ENCODE measurements at regions of chr10 and their contacts with region 1.

Region 1: GRCh38 chr10:127906548-127907377 is at the start of gene PTPRE:
- DNase-seq: peak; percentile 17 to 88
- H3K4me3 ChIP-seq: peak within 1 kb of the TSS; percentile 36 to 87 (median 54)
- H3K27ac ChIP-seq: no peak within 1 kb of the TSS
- H3K4me1 ChIP-seq: peaks cover 0 to 3% (median 1%) of the 10 kb centered on the region in 4 experiments; a peak in 5 of 7 replicates
- H3K27me3 ChIP-seq: peaks cover 3 to 23% (median 15%) of the 10 kb centered on the region in 4 experiments
- CTCF ChIP-seq: peak; percentile 72 to 94 (median 88)
- EP300 ChIP-seq: no peak
- POLR2A ChIP-seq: no peak
- RAD21 ChIP-seq: peak; percentile 67 to 91
- total RNA-seq, gene PTPRE: 0.54 and 0.69 TPM in 2 replicates

Region 2: GRCh38 chr10:127738512-127739424 is 168.0 kb before region 1 on chr10:
- CTCF ChIA-PET with region 1: no interaction called
- POLR2A ChIA-PET with region 1: no interaction called
- DNase-seq: peak in 1 of 2 experiments; percentile 58
- H3K4me3 ChIP-seq: peak overlapping the region; percentile 21 to 60 (median 54); a peak in 5 of 8 replicates
- H3K27ac ChIP-seq: no peak overlapping the region
- H3K4me1 ChIP-seq: peaks cover 0 to 26% (median 13%) of the 10 kb centered on the region in 4 experiments; a peak in 6 of 7 replicates
- H3K27me3 ChIP-seq: peaks cover 25 to 64% (median 60%) of the 10 kb centered on the region in 4 experiments
- CTCF ChIP-seq: no peak
- EP300 ChIP-seq: no peak
- POLR2A ChIP-seq: no peak
- RAD21 ChIP-seq: no peak

Region 3: DNA sequence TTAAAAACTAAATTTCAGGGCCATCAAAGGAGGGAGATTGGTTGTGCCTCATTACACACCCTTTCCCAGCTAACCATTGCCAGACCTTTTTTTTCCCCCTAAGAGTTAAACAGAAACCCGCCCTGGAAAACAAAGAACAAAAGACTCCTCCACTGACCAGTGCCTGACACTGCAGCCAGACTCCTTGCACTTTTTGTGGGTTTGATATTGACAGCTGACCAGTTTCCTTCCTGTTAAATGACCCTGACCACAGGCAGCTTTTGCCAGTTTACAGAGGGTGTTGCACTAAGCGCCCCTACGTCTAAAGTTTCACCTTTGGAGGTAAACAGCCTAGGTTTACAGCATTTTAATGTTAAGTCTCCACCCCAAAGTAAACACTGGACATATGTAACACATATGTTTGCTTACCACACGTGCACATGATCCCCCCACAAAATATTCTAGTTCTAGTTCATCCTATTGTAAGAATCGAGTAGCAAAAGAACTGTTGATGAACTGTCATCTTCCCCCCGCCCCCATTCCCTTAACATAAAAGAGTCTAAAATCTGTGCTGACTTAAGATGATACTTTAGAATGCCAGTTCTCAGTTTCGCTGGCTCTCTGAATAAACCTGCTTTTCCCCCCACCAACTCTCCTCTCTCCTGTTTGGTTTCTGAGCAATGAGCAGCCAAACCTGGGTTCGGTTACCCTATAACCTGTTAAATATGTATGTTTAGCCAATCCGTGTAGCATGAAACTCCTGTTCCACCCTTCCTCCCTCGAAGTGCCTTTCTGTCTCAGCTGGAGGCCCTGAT is 131.8 kb before region 1 on chr10:
- CTCF ChIA-PET with region 1: no interaction called
- POLR2A ChIA-PET with region 1: no interaction called
- DNase-seq: no peak
- H3K4me3 ChIP-seq: no peak overlapping the region
- H3K27ac ChIP-seq: no peak overlapping the region
- H3K4me1 ChIP-seq: no peaks in the 10 kb centered on the region
- H3K27me3 ChIP-seq: no peaks in the 10 kb centered on the region
- CTCF ChIP-seq: no peak
- EP300 ChIP-seq: no peak
- POLR2A ChIP-seq: no peak
- RAD21 ChIP-seq: no peak

Region 4: DNA sequence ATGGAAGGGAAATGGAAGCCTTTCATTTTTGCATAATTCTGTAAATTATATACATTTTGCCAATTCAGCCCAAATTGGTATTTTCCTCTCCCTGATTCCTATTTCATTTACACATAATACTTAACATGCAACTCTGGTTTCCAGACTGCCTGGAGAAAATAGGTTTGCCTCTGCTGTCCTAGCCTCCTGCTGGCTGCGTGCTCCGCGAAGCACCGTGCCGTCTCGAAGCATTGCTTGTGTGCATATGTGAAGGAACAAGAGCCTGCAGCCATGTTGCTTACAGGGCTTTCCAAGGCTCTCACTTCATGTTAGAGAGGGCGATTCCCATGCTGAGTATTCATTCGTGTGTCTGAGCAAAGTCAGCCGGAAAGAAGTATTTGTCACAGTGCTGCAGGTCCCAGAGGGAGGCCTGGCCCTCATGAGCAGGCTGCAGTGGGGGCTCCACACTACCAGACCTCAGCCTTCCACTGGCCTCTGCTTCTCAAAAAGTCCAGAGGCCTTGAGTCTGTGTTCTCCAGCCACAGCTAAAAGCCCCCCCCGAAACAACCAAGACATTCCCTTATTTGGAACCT is 80.5 kb before region 1 on chr10:
- CTCF ChIA-PET with region 1: no interaction called
- POLR2A ChIA-PET with region 1: no interaction called
- DNase-seq: no peak
- H3K4me3 ChIP-seq: no peak overlapping the region
- H3K27ac ChIP-seq: no peak overlapping the region
- H3K4me1 ChIP-seq: peaks cover 0 to 3% (median 1%) of the 10 kb centered on the region in 4 experiments; a peak in 2 of 7 replicates
- H3K27me3 ChIP-seq: no peaks in the 10 kb centered on the region
- CTCF ChIP-seq: no peak
- EP300 ChIP-seq: no peak
- POLR2A ChIP-seq: no peak
- RAD21 ChIP-seq: no peak

Region 5: GRCh38 chr10:127935071-127935561 is 28.4 kb after region 1 on chr10:
- CTCF ChIA-PET with region 1: interaction called, 12 read pairs
- POLR2A ChIA-PET with region 1: no interaction called
- DNase-seq: no peak
- H3K4me3 ChIP-seq: no peak overlapping the region
- H3K27ac ChIP-seq: no peak overlapping the region
- H3K4me1 ChIP-seq: peaks cover 0 to 3% (median 0%) of the 10 kb centered on the region in 4 experiments; a peak in 1 of 7 replicates
- H3K27me3 ChIP-seq: no peaks in the 10 kb centered on the region
- CTCF ChIP-seq: no peak
- EP300 ChIP-seq: no peak
- POLR2A ChIP-seq: no peak
- RAD21 ChIP-seq: no peak

Region 6: DNA sequence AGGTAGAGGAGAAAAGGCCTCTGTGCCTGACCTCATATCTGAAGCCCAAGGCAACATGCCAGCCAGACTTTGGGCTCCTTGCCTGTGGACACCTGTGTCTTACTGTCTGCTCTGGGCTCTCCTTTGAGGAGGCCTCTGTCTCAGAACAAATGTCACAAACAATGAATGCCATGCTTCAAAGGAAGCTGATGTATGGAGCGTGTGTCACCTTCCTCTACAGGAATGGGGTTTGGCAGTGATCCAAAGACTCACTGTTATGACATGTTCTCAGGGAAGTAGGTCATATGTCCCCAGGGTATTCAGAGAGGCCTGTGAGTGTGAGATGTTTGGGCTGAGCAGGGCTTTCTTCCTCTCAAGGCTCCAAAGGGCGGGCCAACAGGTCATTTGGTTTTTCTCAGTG is 38.6 kb after region 1 on chr10:
- CTCF ChIA-PET with region 1: no interaction called
- POLR2A ChIA-PET with region 1: no interaction called
- DNase-seq: no peak
- H3K4me3 ChIP-seq: no peak overlapping the region
- H3K27ac ChIP-seq: no peak overlapping the region
- H3K4me1 ChIP-seq: no peaks in the 10 kb centered on the region
- H3K27me3 ChIP-seq: no peaks in the 10 kb centered on the region; a peak in 1 of 7 replicates
- CTCF ChIP-seq: no peak
- EP300 ChIP-seq: no peak
- POLR2A ChIP-seq: no peak
- RAD21 ChIP-seq: no peak

Region 7: GRCh38 chr10:128011175-128011979 is 104.6 kb after region 1 on chr10:
- CTCF ChIA-PET with region 1: interaction called, 83 read pairs
- POLR2A ChIA-PET with region 1: interaction called, 3 read pairs
- DNase-seq: peak; percentile 47 to 98
- H3K4me3 ChIP-seq: no peak overlapping the region; a peak in 1 of 8 replicates
- H3K27ac ChIP-seq: no peak overlapping the region
- H3K4me1 ChIP-seq: peaks cover 0 to 4% (median 0%) of the 10 kb centered on the region in 4 experiments; a peak in 1 of 7 replicates
- H3K27me3 ChIP-seq: no peaks in the 10 kb centered on the region; a peak in 1 of 7 replicates
- CTCF ChIP-seq: peak; percentile 94 to 98 (median 98)
- EP300 ChIP-seq: no peak
- POLR2A ChIP-seq: no peak
- RAD21 ChIP-seq: peak; percentile 94 to 95

Region 8: DNA sequence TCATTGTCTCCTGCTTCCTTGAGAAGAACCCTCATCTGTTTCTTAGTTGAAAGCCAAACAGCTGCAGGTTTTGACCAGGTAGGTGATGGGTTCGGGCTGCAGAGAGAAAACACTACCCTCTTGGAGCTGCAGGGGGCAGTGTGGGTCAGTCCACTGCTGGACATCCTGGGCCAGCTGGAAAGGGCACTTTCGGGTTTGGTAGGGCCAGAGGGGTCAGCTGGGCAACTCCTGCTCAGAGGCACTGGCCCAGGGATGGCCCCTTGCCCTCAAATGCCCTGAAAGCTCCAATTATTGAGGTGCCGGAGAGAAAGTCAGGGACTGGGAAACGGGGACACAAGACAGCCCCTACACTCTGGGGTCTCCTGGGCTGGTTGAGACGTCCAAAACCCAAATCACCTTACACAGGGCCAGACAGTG is 128.8 kb after region 1 on chr10:
- CTCF ChIA-PET with region 1: interaction called, 12 read pairs
- POLR2A ChIA-PET with region 1: no interaction called
- DNase-seq: peak; percentile 23 to 95
- H3K4me3 ChIP-seq: no peak overlapping the region
- H3K27ac ChIP-seq: no peak overlapping the region
- H3K4me1 ChIP-seq: no peaks in the 10 kb centered on the region
- H3K27me3 ChIP-seq: no peaks in the 10 kb centered on the region
- CTCF ChIP-seq: peak; percentile 75 to 93 (median 90)
- EP300 ChIP-seq: no peak
- POLR2A ChIP-seq: no peak
- RAD21 ChIP-seq: peak; percentile 63 to 80

Measured in H1 (cell line).